ENCODE measurements at regions of chr1 and their contacts with region 1.

Region 1: GRCh38 chr1:200409761-200410565 is at the start of gene ZNF281:
- DNase-seq: peak; percentile 93
- ATAC-seq: peak; percentile 96
- H3K4me3 Mint-ChIP-seq: peak within 1 kb of the TSS; percentile 97
- H3K27ac Mint-ChIP-seq: peak within 1 kb of the TSS; percentile 95
- H3K4me1 Mint-ChIP-seq: peaks cover 51% of the 10 kb centered on the region
- H3K27me3 Mint-ChIP-seq: no peaks in the 10 kb centered on the region
- CTCF ChIP-seq: no peak
- total RNA-seq, gene ZNF281: 28.2 and 31.2 TPM in 2 replicates

Region 2: GRCh38 chr1:200139661-200140250 is 270.2 kb before region 1 on chr1:
- CTCF ChIA-PET with region 1: no interaction called
- POLR2A ChIA-PET with region 1: no interaction called
- intact Hi-C with region 1: loop called (anchors 2 kb)
- DNase-seq: no peak
- ATAC-seq: peak; percentile 78
- H3K4me3 Mint-ChIP-seq: no peak overlapping the region
- H3K27ac Mint-ChIP-seq: no peak overlapping the region
- H3K4me1 Mint-ChIP-seq: no peaks in the 10 kb centered on the region
- H3K27me3 Mint-ChIP-seq: no peaks in the 10 kb centered on the region
- CTCF ChIP-seq: no peak

Region 3: DNA sequence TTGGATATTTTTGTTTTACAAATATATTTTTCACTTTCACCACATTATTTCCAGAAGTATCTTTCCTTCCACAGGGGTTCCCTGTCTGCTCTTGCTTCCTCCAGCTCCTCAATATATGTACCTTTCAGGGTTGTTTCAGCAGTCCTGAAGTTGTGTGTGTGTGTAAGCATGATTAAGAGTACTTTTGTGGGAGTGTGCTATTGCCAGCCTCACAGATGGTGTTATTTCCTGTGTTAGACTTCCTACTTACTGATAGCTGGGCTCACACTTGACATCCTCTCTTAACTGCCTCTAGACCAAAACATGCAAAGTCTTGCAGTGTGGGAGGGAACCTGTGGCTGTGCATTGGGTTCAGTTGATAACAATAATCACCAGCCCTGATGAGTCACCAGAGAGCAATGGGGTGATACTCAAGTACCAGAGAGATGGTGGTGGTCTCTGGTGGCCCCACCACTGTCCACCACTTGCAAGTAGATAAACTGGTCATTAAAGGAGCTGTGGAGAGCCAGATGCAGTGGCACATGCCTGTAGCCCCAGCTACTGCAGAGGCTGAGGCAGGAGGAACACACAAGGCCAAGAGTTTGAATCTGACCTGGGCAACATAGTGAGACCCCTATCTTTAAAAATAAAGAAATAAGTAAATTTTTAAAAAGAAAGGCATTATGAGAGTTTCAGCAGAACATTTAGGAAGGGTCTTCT is 255.7 kb before region 1 on chr1:
- CTCF ChIA-PET with region 1: no interaction called
- POLR2A ChIA-PET with region 1: no interaction called
- intact Hi-C with region 1: loop called (anchors 5 kb)
- DNase-seq: peak; percentile 23
- ATAC-seq: peak; percentile 87
- H3K4me3 Mint-ChIP-seq: peak overlapping the region; percentile 61
- H3K27ac Mint-ChIP-seq: peak overlapping the region; percentile 92
- H3K4me1 Mint-ChIP-seq: peaks cover 55% of the 10 kb centered on the region
- H3K27me3 Mint-ChIP-seq: no peaks in the 10 kb centered on the region
- CTCF ChIP-seq: no peak

Region 4: GRCh38 chr1:200258447-200259375 is 151.3 kb before region 1 on chr1:
- CTCF ChIA-PET with region 1: no interaction called
- POLR2A ChIA-PET with region 1: no interaction called
- intact Hi-C with region 1: loop called (anchors 1 kb)
- DNase-seq: no peak
- ATAC-seq: peak; percentile 82
- H3K4me3 Mint-ChIP-seq: no peak overlapping the region
- H3K27ac Mint-ChIP-seq: no peak overlapping the region
- H3K4me1 Mint-ChIP-seq: peaks cover 7% of the 10 kb centered on the region
- H3K27me3 Mint-ChIP-seq: no peaks in the 10 kb centered on the region
- CTCF ChIP-seq: peak; percentile 45

Region 5: GRCh38 chr1:200392625-200393185 is 17.3 kb before region 1 on chr1:
- CTCF ChIA-PET with region 1: no interaction called
- POLR2A ChIA-PET with region 1: no interaction called
- intact Hi-C with region 1: loop called (anchors 2 kb)
- DNase-seq: no peak
- ATAC-seq: no peak
- H3K4me3 Mint-ChIP-seq: no peak overlapping the region
- H3K27ac Mint-ChIP-seq: no peak overlapping the region
- H3K4me1 Mint-ChIP-seq: no peaks in the 10 kb centered on the region
- H3K27me3 Mint-ChIP-seq: no peaks in the 10 kb centered on the region
- CTCF ChIP-seq: no peak

Region 6: GRCh38 chr1:200448034-200448762 is 38.2 kb after region 1 on chr1:
- CTCF ChIA-PET with region 1: no interaction called
- POLR2A ChIA-PET with region 1: no interaction called
- intact Hi-C with region 1: loop called (anchors 1 kb)
- DNase-seq: no peak
- ATAC-seq: peak; percentile 77
- H3K4me3 Mint-ChIP-seq: peak overlapping the region; percentile 49
- H3K27ac Mint-ChIP-seq: peak overlapping the region; percentile 87
- H3K4me1 Mint-ChIP-seq: peaks cover 24% of the 10 kb centered on the region
- H3K27me3 Mint-ChIP-seq: no peaks in the 10 kb centered on the region
- CTCF ChIP-seq: no peak

Region 7: DNA sequence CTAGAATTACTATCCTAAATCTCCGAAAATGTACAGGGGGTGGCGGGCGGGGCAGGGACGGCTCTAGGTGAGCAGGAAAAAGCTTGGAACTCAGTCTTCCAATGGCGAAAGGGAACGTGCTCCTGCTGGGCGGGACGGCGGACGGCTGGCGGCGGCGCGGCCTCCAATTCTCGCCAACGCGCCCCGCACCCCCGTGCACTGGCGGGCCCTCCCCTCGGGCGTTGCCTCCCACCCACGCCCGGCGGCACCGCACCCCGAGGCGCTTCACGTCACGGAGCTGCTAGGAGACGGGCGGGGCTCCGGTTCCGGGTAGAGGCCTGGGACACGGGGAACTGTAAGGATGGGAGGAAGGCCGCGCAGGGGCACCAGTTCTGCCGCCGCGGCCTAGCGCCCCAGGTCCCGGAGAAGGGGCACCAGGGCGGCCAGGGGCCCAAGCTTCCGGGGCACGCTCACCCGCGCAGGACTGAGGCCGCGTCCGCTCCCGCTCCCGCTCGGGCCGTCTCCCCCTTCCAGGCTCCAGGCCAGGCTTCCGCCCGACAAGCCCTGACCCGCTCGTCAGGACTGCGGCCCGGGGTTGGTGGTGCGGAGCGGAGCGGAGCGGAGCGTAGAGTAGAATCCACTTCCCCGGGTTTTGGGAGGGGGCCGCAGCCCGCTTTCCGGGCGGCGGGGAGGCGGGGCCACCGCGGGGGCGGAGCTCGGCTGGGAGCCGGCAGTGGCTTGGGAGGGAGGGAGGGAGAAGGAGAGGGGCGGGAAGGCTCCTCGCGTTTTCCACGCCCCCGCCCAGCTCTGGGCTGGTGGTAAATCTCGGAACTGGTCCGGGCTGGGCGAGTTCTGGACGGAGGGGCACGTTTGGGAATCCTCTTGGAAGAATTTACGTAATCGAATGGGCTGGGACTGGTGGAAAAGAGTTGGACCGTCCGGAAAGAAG is 259.6 kb after region 1 on chr1 and contains the start of gene DDX59:
- CTCF ChIA-PET with region 1: no interaction called
- POLR2A ChIA-PET with region 1: no interaction called
- intact Hi-C with region 1: loop called (anchors 1 kb)
- DNase-seq: peak; percentile 87
- ATAC-seq: peak; percentile 84
- H3K4me3 Mint-ChIP-seq: peak within 1 kb of the TSS; percentile 97
- H3K27ac Mint-ChIP-seq: peak within 1 kb of the TSS; percentile 96
- H3K4me1 Mint-ChIP-seq: peaks cover 30% of the 10 kb centered on the region
- H3K27me3 Mint-ChIP-seq: no peaks in the 10 kb centered on the region
- CTCF ChIP-seq: no peak
- total RNA-seq, gene DDX59: 27.6 and 28.2 TPM in 2 replicates